Pancreas (tissue), 10 donors: ENCODE measurements at regions of chr1 and their contacts with region 1.

Region 1: GRCh38 chr1:40153073-40153770 is 8.0 kb upstream of the RLF start:
- DNase-seq: no peak
- ATAC-seq: peak in 3 of 4 donors; percentile 75 to 83 (median 75)
- H3K4me3 ChIP-seq: no peak overlapping the region
- H3K27ac ChIP-seq: no peak overlapping the region
- H3K4me1 ChIP-seq: no peaks in the 10 kb centered on the region
- H3K27me3 ChIP-seq: no peaks in the 10 kb centered on the region
- CTCF ChIP-seq: peak; percentile 7 to 48 (median 45)

Region 2: DNA sequence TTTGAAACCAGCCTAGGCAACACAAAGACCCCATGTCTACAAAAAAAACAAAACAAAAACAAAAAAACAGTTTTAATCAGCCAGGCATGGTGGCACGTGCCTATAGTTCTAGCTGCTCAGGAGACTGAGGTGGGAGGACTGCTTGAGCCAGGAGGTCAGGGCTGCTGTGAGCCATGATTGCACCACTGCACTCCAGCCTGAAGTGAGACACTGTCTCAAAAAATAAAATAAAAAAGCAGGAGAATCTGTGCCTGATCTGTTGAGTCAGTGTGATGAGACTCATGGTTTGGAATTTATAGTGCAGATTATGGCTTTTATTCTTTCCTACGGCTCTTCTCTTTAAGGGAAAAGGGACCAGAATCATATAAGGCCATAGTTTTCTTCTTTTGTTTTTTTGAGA is 286.5 kb before region 1 on chr1:
- intact Hi-C with region 1: no loop called
- DNase-seq: no peak
- ATAC-seq: peak in 1 of 4 donors; percentile 17
- H3K4me3 ChIP-seq: no peak overlapping the region
- H3K27ac ChIP-seq: no peak overlapping the region
- H3K4me1 ChIP-seq: peaks cover 0 to 2% (median 1%) of the 10 kb centered on the region in 3 donors
- H3K27me3 ChIP-seq: no peaks in the 10 kb centered on the region
- CTCF ChIP-seq: no peak

Region 3: DNA sequence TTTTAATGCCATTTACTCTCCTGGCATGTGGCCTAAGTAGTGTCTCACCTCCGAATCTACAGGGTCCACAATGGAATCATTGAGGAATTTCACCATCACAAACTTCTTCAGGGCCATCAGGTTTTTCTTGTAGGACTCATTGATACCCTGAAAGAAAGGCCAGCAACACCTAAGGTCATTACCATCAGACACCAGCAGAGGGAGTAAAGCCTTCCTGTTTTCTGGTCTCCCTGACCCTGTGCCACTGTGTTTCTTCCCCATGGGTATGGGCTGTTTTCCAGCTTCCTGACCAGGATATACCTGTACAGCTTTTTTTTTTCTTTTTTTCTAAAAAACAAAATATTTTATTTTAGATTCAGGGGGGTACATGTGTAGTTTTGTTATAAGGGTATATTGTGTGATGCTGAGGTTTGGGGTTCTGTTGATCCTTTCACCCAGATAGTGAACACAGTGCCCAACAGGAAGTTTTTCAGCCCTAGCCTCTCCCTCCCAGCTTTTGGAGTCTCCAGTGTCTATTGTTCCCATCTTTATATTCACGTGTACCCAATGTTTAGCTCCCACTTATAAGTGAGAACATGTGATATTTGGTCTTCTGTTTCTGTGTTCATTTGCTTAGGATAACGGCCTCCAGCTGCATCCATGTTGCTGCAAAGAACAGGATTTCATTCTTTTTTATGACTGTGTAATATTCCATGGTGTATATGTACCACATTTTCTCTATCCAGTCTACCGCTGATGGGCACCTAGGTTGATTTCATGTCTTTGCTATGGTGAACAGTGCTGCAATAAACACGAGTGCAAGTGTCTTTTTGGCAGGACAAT is 74.5 kb before region 1 on chr1:
- intact Hi-C with region 1: no loop called
- DNase-seq: peak in 3 of 6 donors; percentile 24 to 61 (median 33)
- ATAC-seq: peak; percentile 59 to 86 (median 80)
- H3K4me3 ChIP-seq: no peak overlapping the region
- H3K27ac ChIP-seq: no peak overlapping the region
- H3K4me1 ChIP-seq: no peaks in the 10 kb centered on the region
- H3K27me3 ChIP-seq: no peaks in the 10 kb centered on the region
- CTCF ChIP-seq: peak; percentile 52 to 76 (median 66)

Region 4: GRCh38 chr1:40338745-40339424 is 185.7 kb after region 1 on chr1:
- intact Hi-C with region 1: loop called (anchors 5 to 10 kb)
- DNase-seq: peak; percentile 64 to 94 (median 87)
- ATAC-seq: peak; percentile 93 to 98 (median 98)
- H3K4me3 ChIP-seq: peak overlapping the region in 1 of 4 donors; percentile 23
- H3K27ac ChIP-seq: peak overlapping the region in 1 of 4 donors; percentile 37
- H3K4me1 ChIP-seq: no peaks in the 10 kb centered on the region
- H3K27me3 ChIP-seq: no peaks in the 10 kb centered on the region
- CTCF ChIP-seq: peak; percentile 86 to 95 (median 92)

Region 5: GRCh38 chr1:40344597-40344996 is 191.4 kb after region 1 on chr1:
- intact Hi-C with region 1: loop called (anchors 5 to 10 kb)
- DNase-seq: peak in 1 of 6 donors; percentile 23
- ATAC-seq: peak in 3 of 4 donors; percentile 56 to 82 (median 78)
- H3K4me3 ChIP-seq: no peak overlapping the region
- H3K27ac ChIP-seq: no peak overlapping the region
- H3K4me1 ChIP-seq: no peaks in the 10 kb centered on the region
- H3K27me3 ChIP-seq: no peaks in the 10 kb centered on the region
- CTCF ChIP-seq: no peak

Region 6: DNA sequence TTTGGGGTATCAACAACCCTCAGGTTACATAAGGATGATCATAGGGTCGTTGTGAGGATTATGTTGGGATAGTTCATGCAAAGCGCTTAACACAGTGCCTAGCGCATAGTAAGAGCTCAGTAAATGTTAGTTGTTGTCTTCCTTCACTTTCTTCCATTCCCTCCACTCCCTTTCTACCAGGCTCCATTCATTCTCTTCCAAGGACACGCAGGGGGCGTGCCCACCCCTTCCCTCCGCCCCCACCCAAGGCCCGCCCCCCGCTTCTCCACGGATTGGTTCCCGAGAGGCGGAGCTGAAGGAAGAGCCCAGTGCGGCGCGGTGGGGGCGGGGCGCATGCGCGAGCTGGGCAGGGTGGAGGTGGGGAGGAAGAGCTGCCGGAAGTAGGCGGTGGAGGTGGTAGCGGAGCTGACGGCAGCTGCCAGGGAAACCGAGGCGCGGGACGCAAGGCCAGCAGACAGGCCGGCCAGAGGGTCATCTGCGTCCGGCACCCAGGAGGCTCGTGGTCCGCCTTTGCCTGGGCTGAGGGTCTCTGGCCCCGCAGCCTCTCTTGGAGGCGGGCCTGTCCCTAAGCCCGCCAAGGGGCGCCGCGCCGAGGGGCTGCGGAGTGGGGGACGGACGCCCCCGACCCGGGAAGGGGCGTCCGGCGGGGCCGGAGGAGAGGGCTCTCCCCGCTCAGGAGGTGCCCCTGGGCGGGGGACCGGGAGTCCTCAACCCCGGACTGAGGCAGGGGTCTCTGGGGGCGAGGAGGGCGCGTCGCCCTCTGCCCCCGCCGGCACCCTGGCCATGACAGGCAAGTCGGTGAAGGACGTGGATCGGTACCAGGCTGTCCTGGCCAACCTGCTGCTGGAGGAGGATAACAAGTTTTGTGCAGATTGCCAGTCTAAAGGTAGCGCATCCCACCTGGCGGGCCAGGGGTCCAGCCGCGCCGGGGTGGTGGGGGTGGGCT is 220.4 kb after region 1 on chr1 and contains the start of gene SMAP2:
- intact Hi-C with region 1: no loop called
- DNase-seq: peak; percentile 96 to 99 (median 98)
- ATAC-seq: peak; percentile 97 to 100 (median 98)
- H3K4me3 ChIP-seq: peak within 1 kb of the TSS; percentile 99 to 100 (median 99)
- H3K27ac ChIP-seq: peak within 1 kb of the TSS; percentile 83 to 91 (median 86)
- H3K4me1 ChIP-seq: peaks cover 0 to 11% (median 11%) of the 10 kb centered on the region in 3 donors
- H3K27me3 ChIP-seq: no peaks in the 10 kb centered on the region
- CTCF ChIP-seq: no peak
- total RNA-seq, gene SMAP2: 7.2 to 26.1 (median 12.3) TPM

Region 7: GRCh38 chr1:40404670-40405462 is 251.6 kb after region 1 on chr1:
- intact Hi-C with region 1: loop called in 1 of 3 experiments (anchors 5 kb)
- DNase-seq: no peak
- ATAC-seq: peak; percentile 72 to 91 (median 88)
- H3K4me3 ChIP-seq: no peak overlapping the region
- H3K27ac ChIP-seq: no peak overlapping the region
- H3K4me1 ChIP-seq: peaks cover 0 to 13% (median 9%) of the 10 kb centered on the region in 3 donors
- H3K27me3 ChIP-seq: no peaks in the 10 kb centered on the region
- CTCF ChIP-seq: peak; percentile 56 to 83 (median 70)